ENCODE measurements at regions of chr6 and their contacts with region 1.

Region 1: DNA sequence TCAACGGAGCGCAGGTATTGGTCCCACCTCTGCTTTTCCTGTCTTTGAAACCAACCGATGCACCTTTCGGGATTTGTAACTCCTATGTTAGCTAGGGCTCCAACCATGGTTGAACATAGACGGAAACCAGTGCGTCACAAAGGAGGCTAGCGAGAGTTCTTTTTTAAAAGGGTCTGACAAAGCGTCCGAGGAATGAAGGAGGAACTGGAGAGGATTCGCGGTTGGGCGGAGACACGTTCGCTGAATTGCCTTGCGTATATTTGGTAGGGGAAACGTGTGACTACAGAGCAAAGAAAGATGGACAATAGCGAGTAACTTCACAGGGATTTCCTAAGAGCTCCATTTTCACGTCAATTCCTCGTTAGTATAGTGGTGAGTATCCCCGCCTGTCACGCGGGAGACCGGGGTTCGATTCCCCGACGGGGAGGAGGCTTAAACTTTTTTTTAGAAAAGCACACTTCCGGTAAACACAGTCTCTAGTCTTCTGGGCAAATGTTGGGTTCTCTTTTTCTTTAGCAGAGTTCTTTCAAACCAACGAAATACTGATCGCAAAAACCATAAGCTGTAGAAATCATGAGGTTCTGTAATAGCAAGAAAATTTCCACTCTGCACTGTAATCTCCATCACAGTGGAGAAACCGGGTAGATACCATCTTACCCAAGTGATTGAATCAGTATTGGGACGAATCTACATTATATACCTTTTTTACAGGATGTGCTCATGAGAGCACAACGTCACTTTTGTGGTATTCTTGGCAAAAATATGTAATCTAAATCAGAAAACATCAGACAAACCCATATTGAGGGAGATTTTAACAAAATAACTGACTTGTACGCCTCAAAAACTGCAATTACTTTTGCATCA is 6.6 kb upstream of the ZNF184 start:
- DNase-seq: peak; percentile 87 to 93 (median 92)
- H3K4me3 ChIP-seq: peak overlapping the region; percentile 88 to 93
- H3K4me3 Mint-ChIP-seq: no peak overlapping the region
- H3K27ac ChIP-seq: peak overlapping the region; percentile 85
- H3K27ac Mint-ChIP-seq: no peak overlapping the region
- H3K4me1 ChIP-seq: peaks cover 17% of the 10 kb centered on the region
- H3K4me1 Mint-ChIP-seq: peaks cover 0 to 11% (median 5%) of the 10 kb centered on the region in 4 donors
- H3K27me3 ChIP-seq: no peaks in the 10 kb centered on the region
- H3K27me3 Mint-ChIP-seq: no peaks in the 10 kb centered on the region

Region 2: GRCh38 chr6:27157459-27158315 is 321.9 kb before region 1 on chr6:
- CTCF ChIA-PET with region 1: no interaction called
- POLR2A ChIA-PET with region 1: interaction called, 10 read pairs
- intact Hi-C with region 1: no loop called
- DNase-seq: peak; percentile 78 to 92 (median 82)
- H3K4me3 ChIP-seq: peak overlapping the region; percentile 18 to 44
- H3K4me3 Mint-ChIP-seq: peak overlapping the region; percentile 81 to 91 (median 84)
- H3K27ac ChIP-seq: no peak overlapping the region
- H3K27ac Mint-ChIP-seq: peak overlapping the region; percentile 68 to 95 (median 85)
- H3K4me1 ChIP-seq: peaks cover 30% of the 10 kb centered on the region
- H3K4me1 Mint-ChIP-seq: peaks cover 21 to 46% (median 38%) of the 10 kb centered on the region in 4 donors
- H3K27me3 ChIP-seq: no peaks in the 10 kb centered on the region
- H3K27me3 Mint-ChIP-seq: peaks cover 0 to 4% of the 10 kb centered on the region in 2 donors

Region 3: DNA sequence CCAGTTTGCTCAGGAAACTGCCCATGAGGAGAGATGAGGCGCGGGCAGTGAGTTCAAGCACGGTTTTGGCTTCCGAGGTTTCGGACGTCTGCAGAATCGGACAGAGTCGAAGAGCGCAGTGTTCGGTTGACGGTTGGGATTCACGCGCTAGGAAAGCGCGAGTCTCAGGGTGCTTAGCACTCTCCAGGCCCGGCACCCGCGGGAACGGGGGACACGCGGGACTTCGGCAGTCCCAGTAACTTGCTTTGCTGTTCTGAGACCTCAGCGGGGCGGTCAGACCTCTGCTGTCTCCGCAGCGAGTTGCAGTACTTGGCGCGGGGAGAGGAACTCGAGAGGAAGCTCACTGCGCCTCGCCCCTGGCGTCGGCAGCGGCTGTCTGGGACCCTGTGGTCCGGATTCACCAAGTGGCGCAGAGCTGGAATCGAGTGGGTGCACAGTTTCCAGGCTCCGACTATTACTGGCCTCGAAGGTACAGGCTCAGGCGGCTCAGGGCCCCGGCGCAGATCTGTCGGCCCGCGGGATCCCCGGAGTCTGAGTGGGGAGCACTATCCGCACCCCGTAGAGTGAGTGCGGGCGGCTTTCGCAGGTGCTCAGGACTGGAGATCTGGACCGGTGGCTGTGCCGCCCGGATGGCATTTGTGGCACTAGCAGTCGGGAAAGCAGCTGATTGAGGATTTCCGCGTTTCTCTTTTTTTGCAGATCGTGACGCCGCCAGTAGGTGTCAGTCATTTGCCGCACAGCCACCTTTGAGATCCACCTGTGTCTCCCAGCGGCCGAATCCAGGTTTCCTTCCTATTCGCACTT is 167.2 kb before region 1 on chr6 and contains the start of gene POM121L2:
- CTCF ChIA-PET with region 1: interaction called, 3 read pairs
- POLR2A ChIA-PET with region 1: interaction called, 6 read pairs
- intact Hi-C with region 1: loop called (anchors 1 kb)
- DNase-seq: peak; percentile 50 to 68 (median 61)
- H3K4me3 ChIP-seq: peak within 1 kb of the TSS; percentile 44 to 57
- H3K4me3 Mint-ChIP-seq: peak within 1 kb of the TSS; percentile 81 to 86 (median 83)
- H3K27ac ChIP-seq: no peak within 1 kb of the TSS
- H3K27ac Mint-ChIP-seq: peak within 1 kb of the TSS in 3 of 7 donors; percentile 7 to 37 (median 21)
- H3K4me1 ChIP-seq: peaks cover 5% of the 10 kb centered on the region
- H3K4me1 Mint-ChIP-seq: peaks cover 0 to 14% (median 7%) of the 10 kb centered on the region in 4 donors
- H3K27me3 ChIP-seq: peaks cover 26% of the 10 kb centered on the region
- H3K27me3 Mint-ChIP-seq: peaks cover 39 to 55% of the 10 kb centered on the region in 2 donors
- total RNA-seq, gene POM121L2: not detected

Region 4: GRCh38 chr6:27503436-27504030 is 24.0 kb after region 1 on chr6:
- CTCF ChIA-PET with region 1: interaction called, 4 read pairs
- POLR2A ChIA-PET with region 1: interaction called, 39 read pairs
- intact Hi-C with region 1: loop called (anchors 1 kb)
- DNase-seq: peak; percentile 79 to 82 (median 80)
- H3K4me3 ChIP-seq: peak overlapping the region; percentile 79
- H3K4me3 Mint-ChIP-seq: peak overlapping the region; percentile 87 to 94 (median 90)
- H3K27ac ChIP-seq: peak overlapping the region; percentile 9
- H3K27ac Mint-ChIP-seq: peak overlapping the region; percentile 78 to 99 (median 91)
- H3K4me1 ChIP-seq: peaks cover 36% of the 10 kb centered on the region
- H3K4me1 Mint-ChIP-seq: peaks cover 25 to 44% (median 33%) of the 10 kb centered on the region in 4 donors
- H3K27me3 ChIP-seq: peaks cover 4% of the 10 kb centered on the region
- H3K27me3 Mint-ChIP-seq: peaks cover 0 to 25% of the 10 kb centered on the region in 2 donors

Region 5: DNA sequence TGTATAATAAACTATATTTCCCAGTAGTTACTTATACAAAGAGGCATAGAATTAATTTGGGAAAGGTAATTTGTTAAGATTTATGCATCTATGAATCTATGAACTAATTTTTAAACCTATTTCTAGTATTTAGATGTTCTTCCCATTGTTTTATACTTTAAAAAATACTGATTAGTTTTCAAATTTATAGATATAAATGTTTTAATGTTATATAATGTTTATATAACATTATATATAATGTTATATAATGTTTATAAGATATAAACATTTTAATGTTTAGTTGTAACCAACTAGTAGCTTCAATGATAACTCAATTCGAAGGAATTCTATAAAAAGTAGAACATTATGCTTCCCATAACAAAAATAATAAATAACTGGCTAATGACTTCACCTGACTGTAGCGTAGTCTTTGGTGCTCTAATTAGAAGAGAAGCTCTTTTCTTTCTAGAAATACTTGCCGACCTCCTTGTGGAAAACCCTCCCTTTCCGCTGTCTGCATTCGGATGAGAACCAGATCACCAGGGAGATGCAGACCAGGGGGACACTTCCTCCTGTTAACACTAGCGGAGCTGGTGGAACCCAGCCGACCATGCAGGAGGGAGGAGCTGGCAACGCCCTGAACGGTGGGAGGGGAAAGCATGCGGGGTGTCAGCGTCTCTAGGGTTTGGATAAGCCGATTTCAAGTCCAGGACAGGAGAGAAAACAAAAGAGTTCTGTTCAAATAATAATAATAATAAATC is 274.3 kb after region 1 on chr6:
- CTCF ChIA-PET with region 1: interaction called, 11 read pairs
- POLR2A ChIA-PET with region 1: interaction called, 39 read pairs
- intact Hi-C with region 1: loop called (anchors 1 kb)
- DNase-seq: peak; percentile 27 to 66 (median 44)
- H3K4me3 ChIP-seq: peak overlapping the region; percentile 50 to 63
- H3K4me3 Mint-ChIP-seq: peak overlapping the region; percentile 85 to 99 (median 93)
- H3K27ac ChIP-seq: no peak overlapping the region
- H3K27ac Mint-ChIP-seq: peak overlapping the region; percentile 16 to 100 (median 99)
- H3K4me1 ChIP-seq: peaks cover 20% of the 10 kb centered on the region
- H3K4me1 Mint-ChIP-seq: peaks cover 15 to 47% (median 26%) of the 10 kb centered on the region in 4 donors
- H3K27me3 ChIP-seq: no peaks in the 10 kb centered on the region
- H3K27me3 Mint-ChIP-seq: peaks cover 0 to 5% of the 10 kb centered on the region in 2 donors

Region 6: DNA sequence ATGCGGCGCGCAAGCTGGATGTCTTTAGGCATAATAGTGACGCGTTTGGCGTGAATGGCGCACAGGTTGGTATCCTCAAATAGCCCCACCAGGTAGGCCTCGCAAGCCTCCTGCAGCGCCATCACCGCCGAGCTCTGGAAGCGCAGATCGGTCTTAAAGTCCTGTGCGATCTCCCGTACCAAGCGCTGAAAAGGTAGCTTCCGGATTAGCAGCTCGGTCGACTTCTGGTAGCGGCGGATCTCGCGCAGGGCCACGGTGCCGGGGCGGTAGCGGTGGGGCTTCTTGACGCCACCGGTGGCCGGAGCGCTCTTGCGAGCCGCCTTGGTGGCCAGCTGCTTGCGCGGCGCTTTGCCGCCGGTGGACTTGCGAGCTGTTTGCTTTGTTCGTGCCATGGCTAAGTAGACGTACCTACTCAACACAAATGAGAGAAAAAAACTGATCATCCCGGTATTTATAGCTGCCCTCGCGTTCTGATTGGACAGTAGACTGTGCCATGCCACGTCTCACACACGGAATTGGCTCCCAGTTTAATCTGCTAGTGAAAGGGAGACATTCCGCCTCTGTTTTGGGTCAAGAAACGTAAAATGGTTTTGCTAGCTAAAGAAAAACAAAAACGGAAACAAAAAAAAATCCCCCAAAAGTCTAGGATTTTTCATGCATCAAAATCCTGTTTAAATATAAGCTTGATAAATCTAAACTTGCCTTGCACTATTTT is 392.5 kb after region 1 on chr6:
- CTCF ChIA-PET with region 1: no interaction called
- POLR2A ChIA-PET with region 1: interaction called, 30 read pairs
- intact Hi-C with region 1: no loop called
- DNase-seq: peak; percentile 91 to 96 (median 94)
- H3K4me3 ChIP-seq: peak overlapping the region; percentile 77 to 89
- H3K4me3 Mint-ChIP-seq: peak overlapping the region; percentile 87 to 94 (median 90)
- H3K27ac ChIP-seq: peak overlapping the region; percentile 86
- H3K27ac Mint-ChIP-seq: peak overlapping the region; percentile 89 to 97 (median 94)
- H3K4me1 ChIP-seq: peaks cover 33% of the 10 kb centered on the region
- H3K4me1 Mint-ChIP-seq: peaks cover 24 to 48% (median 33%) of the 10 kb centered on the region in 4 donors
- H3K27me3 ChIP-seq: no peaks in the 10 kb centered on the region
- H3K27me3 Mint-ChIP-seq: no peaks in the 10 kb centered on the region

Measured in CD4-positive, alpha-beta memory T cell (primary cell).